MCF 10A (cell line): ENCODE measurements at regions of chr10 and their contacts with region 1.

Region 1: GRCh38 chr10:15824498-15824897 is 35.8 kb downstream of the MINDY3 start:
- DNase-seq: peak; percentile 11
- H3K4me3 Mint-ChIP-seq: no peak overlapping the region
- H3K27ac Mint-ChIP-seq: no peak overlapping the region
- H3K4me1 Mint-ChIP-seq: no peaks in the 10 kb centered on the region
- H3K27me3 Mint-ChIP-seq: no peaks in the 10 kb centered on the region
- CTCF ChIP-seq: peak; percentile 27

Region 2: DNA sequence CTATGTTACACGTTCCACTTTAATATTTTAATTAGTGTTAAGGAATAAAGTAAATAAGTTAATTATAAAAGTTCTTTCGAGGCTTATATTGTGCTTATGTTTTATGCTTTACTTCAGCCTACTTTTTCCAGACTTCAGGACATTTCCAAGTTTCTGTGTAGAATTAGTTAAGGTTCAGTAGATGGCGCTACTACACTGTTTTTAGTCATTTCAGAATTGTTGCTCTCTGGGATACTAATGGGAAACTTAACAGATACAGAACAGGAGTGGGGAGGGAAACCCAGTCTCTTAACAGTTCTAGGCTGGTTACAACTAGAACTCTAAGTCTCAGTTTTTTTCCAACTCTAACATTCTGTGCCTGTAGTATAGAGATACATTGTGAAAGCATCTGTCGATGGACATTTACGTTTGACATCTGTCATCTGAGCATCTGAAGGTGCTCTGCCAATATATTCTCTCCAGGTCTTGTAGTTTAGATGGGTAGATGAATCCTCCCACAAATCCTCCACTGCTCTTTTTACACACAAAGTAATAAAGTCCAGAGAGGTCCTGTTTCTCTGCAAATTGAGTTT is 396.6 kb before region 1 on chr10:
- CTCF ChIA-PET with region 1: interaction called, 7 read pairs
- POLR2A ChIA-PET with region 1: no interaction called
- intact Hi-C with region 1: loop called (anchors 2 kb)
- DNase-seq: peak; percentile 45
- H3K4me3 Mint-ChIP-seq: no peak overlapping the region
- H3K27ac Mint-ChIP-seq: no peak overlapping the region
- H3K4me1 Mint-ChIP-seq: no peaks in the 10 kb centered on the region
- H3K27me3 Mint-ChIP-seq: peaks cover 18% of the 10 kb centered on the region
- CTCF ChIP-seq: peak; percentile 65

Region 3: GRCh38 chr10:15585303-15585715 is 239.2 kb before region 1 on chr10:
- CTCF ChIA-PET with region 1: no interaction called
- POLR2A ChIA-PET with region 1: no interaction called
- intact Hi-C with region 1: loop called (anchors 5 kb)
- DNase-seq: peak; percentile 61
- H3K4me3 Mint-ChIP-seq: no peak overlapping the region
- H3K27ac Mint-ChIP-seq: no peak overlapping the region
- H3K4me1 Mint-ChIP-seq: no peaks in the 10 kb centered on the region
- H3K27me3 Mint-ChIP-seq: peaks cover 30% of the 10 kb centered on the region
- CTCF ChIP-seq: peak; percentile 76

Region 4: DNA sequence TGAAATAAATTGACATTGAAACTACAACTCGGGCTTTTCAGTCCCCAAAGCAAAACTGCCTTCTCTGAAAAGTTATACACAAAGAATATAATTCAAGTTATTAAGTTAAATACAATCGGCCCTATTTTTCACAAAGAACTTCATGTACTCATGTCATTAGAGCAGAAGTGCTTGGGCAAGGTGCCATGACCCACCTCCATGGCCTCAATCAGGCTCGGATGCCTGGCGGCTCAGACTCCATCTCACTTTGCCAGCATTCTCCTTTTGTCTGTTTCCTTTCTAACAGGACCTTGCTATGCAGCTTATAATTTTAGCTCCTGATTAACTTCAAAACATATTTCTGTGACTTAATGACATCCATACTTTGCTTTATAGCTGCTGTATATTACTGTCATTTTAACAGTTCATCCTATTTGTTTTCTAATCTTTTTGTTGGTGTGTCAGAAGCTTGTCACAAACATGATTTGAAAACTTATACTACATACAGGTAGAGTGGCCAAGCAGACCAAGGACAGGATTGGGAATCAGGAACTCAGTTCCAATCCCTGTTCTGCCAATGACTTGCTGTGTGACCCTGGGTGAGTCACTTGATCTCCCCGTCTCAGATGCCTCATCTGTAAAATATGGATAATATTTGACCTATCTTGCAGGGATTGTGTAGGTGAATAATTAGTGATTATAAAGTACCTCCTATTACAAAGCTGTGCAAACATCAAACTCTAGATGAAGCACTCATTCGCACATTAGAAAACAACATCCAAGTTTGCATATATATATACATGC is 44.0 kb before region 1 on chr10:
- CTCF ChIA-PET with region 1: no interaction called
- POLR2A ChIA-PET with region 1: no interaction called
- intact Hi-C with region 1: no loop called
- DNase-seq: no peak
- H3K4me3 Mint-ChIP-seq: no peak overlapping the region
- H3K27ac Mint-ChIP-seq: peak overlapping the region; percentile 35
- H3K4me1 Mint-ChIP-seq: peaks cover 3% of the 10 kb centered on the region
- H3K27me3 Mint-ChIP-seq: no peaks in the 10 kb centered on the region
- CTCF ChIP-seq: no peak